HepG2 (cell line): ENCODE measurements at regions of chr10 and their contacts with region 1.

Region 1: DNA sequence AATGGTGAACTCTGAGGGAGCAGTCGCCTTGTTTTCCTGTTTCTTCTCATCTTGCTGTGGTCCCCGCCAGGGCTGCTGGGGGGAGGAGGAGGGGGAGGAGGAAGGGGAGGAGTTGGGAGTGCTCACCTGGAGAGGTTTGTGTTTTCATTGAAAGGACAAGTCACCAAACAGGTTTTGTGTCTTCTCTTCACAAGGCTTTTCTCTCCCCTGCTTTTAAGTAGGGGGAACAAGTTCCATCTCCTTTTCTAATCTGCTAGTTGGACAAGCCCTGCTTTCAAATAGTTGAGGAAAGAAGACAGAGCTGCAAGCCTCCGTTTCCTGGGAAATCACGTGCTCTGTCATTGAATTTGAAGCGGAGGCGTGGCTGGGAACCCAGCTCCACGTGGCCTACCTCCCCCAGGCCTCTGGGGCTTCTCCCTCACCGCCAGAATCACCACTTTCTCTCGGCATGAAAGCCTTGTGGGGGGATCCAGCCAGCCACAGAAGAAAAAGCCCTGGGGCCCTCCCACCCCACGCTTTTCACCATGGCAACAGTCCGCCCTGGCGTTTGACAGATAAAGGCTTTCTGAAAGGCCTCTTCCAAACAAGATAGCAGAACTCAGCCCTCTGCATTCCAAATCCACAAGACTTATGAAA is 51.5 kb downstream of the PROSER2 start:
- DNase-seq: peak; percentile 80
- ATAC-seq: peak; percentile 48
- H3K4me3 ChIP-seq: peak overlapping the region; percentile 49 to 69 (median 49); a peak in 5 of 6 replicates
- H3K27ac ChIP-seq: peak overlapping the region; percentile 94
- H3K4me1 ChIP-seq: peaks cover 66% of the 10 kb centered on the region
- H3K27me3 ChIP-seq: no peaks in the 10 kb centered on the region
- CTCF ChIP-seq: no peak
- EP300 ChIP-seq: no peak
- POLR2A ChIP-seq: 0 out of 4 replicates have a peak, but pooled peaks of 1 of the 2 experiments have one; percentile 2
- RAD21 ChIP-seq: no peak

Region 2: DNA sequence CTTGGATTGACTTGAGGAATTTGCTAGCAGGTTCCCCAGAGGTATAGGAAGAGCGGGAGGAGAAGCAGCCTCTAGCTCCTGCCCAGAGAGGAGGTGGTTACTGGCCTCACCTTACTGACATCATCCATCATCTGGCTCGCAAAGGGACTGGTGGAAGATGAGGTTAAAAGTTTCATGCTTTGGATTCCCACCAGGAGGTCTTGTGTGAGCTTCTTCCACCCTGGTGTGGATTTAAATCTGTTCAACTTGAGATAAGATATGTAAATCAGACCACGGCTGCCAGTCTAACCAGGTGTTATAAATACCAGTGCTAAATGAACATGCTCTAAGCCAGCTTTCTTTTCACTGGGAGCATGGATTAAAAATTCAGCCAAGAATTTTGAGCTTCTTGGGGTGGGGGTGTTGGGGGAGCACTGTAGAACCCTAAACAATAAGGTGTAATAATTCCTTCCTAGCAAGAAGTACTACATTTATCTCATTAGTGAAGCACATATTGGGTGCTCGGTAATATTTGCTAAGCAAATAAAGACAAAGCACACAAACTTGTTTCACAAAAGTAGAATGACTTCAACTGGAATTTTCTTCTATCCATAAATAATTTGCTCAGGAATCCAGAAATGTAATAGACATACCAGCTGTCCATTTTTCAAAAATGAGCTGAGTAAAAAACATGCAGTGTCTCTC is 43.7 kb before region 1 on chr10:
- CTCF ChIA-PET with region 1: no interaction called
- POLR2A ChIA-PET with region 1: interaction called, 10 read pairs
- in situ Hi-C with region 1: no loop called
- intact Hi-C with region 1: no loop called
- DNase-seq: no peak
- ATAC-seq: peak; percentile 56
- H3K4me3 ChIP-seq: peak overlapping the region; percentile 27 to 40 (median 34); a peak in 4 of 6 replicates
- H3K27ac ChIP-seq: peak overlapping the region; percentile 77
- H3K4me1 ChIP-seq: peaks cover 79% of the 10 kb centered on the region
- H3K27me3 ChIP-seq: no peaks in the 10 kb centered on the region
- CTCF ChIP-seq: no peak
- EP300 ChIP-seq: no peak
- POLR2A ChIP-seq: no peak
- RAD21 ChIP-seq: no peak

Region 3: DNA sequence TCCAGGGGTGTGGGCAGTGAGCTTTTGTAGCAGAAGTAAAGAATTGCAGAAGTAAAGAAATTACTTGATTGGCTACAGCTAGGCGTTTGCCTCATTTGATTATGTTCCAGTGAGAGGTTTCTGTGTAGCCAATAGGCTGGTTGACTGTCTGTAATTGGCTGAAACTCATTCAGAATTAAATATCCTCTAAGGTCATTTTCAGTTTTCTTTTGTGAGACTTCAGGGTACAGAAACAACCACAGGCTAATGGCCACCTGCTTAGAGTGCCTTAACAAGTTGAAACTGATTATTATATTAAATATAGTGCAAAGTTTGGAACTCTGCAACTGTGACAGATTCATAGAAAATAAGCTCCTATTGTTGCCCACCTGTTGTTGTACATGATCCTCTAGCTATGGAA is 265.4 kb after region 1 on chr10:
- CTCF ChIA-PET with region 1: no interaction called
- POLR2A ChIA-PET with region 1: no interaction called
- in situ Hi-C with region 1: no loop called
- intact Hi-C with region 1: no loop called
- DNase-seq: no peak
- ATAC-seq: no peak
- H3K4me3 ChIP-seq: no peak overlapping the region
- H3K27ac ChIP-seq: no peak overlapping the region
- H3K4me1 ChIP-seq: no peaks in the 10 kb centered on the region
- H3K27me3 ChIP-seq: no peaks in the 10 kb centered on the region
- CTCF ChIP-seq: no peak
- EP300 ChIP-seq: no peak
- POLR2A ChIP-seq: no peak
- RAD21 ChIP-seq: no peak